CD4-positive, alpha-beta memory T cell (primary cell): ENCODE measurements at regions of chr5 and their contacts with region 1.

Region 1: DNA sequence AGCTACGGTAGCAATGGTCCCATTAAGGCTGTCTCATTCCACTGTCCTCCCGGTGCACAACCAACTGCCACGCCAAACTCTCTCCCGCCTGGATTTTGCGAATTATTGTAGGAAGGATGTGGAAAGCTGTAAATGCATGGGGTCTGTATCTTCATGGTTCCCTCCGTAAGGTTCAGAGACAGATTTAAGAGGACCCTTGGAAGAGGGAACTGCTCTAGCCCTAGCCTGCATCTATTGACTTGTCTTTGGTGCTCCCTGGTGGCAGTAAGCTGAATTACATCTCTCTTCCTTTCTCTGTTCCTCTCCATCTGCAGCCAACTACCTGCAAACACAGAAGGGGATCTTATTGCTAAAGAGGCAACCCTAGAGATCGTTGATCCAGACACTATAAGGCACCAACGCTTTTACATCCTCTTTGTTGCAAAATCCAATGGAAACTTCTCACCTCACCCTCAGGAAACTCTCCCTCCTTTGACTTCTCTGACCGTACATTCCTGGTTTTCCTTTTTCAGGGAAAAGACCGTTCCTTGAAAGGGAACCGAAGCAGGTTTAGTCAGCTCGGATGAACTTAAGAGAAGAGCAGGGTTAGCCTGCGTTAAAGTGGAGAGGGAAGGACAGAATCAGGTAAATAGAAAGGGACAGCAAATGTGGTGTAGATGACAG is 11.9 kb downstream of the CAPSL start:
- DNase-seq: peak; percentile 63 to 78 (median 72)
- H3K4me3 ChIP-seq: no peak overlapping the region
- H3K4me3 Mint-ChIP-seq: peak overlapping the region in 6 of 8 donors; percentile 60 to 82 (median 76)
- H3K27ac ChIP-seq: no peak overlapping the region
- H3K27ac Mint-ChIP-seq: peak overlapping the region in 3 of 7 donors; percentile 1 to 80 (median 49)
- H3K4me1 ChIP-seq: peaks cover 20% of the 10 kb centered on the region
- H3K4me1 Mint-ChIP-seq: peaks cover 26 to 38% (median 34%) of the 10 kb centered on the region in 4 donors
- H3K27me3 ChIP-seq: no peaks in the 10 kb centered on the region
- H3K27me3 Mint-ChIP-seq: peaks cover 5 to 7% of the 10 kb centered on the region in 2 donors

Region 2: DNA sequence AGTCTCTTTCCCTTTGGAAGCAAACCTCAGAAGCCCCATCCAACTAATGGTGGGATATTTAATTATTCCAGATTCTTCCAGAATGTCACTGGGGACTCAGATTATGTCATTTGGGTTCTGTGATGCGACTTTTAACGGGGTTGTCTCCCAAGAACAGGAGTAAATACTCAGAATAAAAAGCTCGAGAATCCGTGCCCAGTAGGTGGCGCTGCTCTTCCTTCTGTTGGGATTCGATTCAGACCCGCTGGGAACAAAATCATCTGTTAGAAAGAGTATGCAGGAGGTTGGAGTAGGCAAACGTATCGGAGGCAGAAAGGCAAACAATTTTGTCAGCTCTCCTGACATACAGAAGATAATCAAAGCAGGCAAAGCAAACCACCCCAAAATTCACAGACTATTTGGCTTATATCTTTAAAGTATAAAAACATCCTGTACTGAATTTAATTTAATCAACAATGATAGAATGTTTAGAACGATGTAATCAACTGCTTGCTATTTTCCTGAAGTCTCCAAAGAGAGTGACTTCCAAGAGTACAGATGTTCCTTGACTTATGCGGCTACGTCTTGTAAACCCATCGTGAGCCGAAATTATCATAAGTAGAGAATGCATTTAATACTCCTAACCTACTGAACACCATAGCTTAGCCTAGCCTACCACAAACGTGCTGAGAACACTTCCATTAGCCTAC is 1440.2 kb before region 1 on chr5:
- CTCF ChIA-PET with region 1: no interaction called
- POLR2A ChIA-PET with region 1: no interaction called
- intact Hi-C with region 1: loop called (anchors 2 kb)
- DNase-seq: peak in 4 of 5 donors; percentile 34 to 47 (median 42)
- H3K4me3 ChIP-seq: no peak overlapping the region
- H3K4me3 Mint-ChIP-seq: no peak overlapping the region
- H3K27ac ChIP-seq: no peak overlapping the region
- H3K27ac Mint-ChIP-seq: no peak overlapping the region
- H3K4me1 ChIP-seq: no peaks in the 10 kb centered on the region
- H3K4me1 Mint-ChIP-seq: peaks cover 3 to 5% (median 4%) of the 10 kb centered on the region in 4 donors
- H3K27me3 ChIP-seq: no peaks in the 10 kb centered on the region
- H3K27me3 Mint-ChIP-seq: peaks cover 17 to 30% of the 10 kb centered on the region in 2 donors

Region 3: DNA sequence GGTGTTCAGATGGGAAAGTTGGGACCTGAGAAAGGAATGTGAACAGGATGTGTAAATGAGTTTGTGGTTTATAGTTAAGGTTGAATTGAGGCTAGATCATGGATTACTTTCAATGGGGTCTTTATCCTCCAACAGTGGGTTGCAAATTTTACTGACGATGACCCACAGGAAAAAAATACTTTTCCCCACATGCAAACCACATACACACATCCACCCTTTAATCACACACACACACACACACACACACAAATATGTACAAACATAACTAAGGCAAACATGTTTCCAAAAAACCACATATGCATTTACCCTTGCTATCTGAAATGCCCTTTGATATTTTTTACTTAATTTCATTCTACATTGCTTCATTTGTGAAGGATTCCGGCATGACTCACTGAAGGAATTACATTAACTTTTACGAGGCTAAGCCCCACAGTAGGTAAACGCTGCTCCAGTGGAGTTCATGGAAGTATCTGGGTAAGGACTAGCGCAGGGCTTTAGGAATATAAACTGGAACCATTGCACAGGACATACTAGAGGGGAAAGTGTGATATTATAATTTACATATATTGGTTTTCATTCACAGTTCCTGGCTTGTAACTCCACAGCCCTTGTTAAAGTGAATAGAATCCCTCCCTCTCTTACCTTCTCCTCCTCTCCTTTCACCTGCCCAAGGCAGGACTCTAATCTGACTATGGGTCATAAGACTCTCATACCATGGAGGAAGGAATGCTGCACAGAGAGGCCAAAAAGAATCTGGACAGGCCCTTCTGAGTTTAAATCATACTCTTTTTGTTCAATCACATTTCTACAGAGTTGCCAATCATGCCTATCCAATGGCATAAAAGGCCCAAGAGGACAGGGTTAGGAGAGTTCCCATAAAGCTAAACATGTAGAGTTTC is 317.4 kb before region 1 on chr5:
- CTCF ChIA-PET with region 1: interaction called, 142 read pairs
- POLR2A ChIA-PET with region 1: no interaction called
- intact Hi-C with region 1: no loop called
- DNase-seq: no peak
- H3K4me3 ChIP-seq: no peak overlapping the region
- H3K4me3 Mint-ChIP-seq: no peak overlapping the region
- H3K27ac ChIP-seq: no peak overlapping the region
- H3K27ac Mint-ChIP-seq: no peak overlapping the region
- H3K4me1 ChIP-seq: no peaks in the 10 kb centered on the region
- H3K4me1 Mint-ChIP-seq: no peaks in the 10 kb centered on the region
- H3K27me3 ChIP-seq: no peaks in the 10 kb centered on the region
- H3K27me3 Mint-ChIP-seq: peaks cover 4 to 5% of the 10 kb centered on the region in 2 donors

Region 4: GRCh38 chr5:35657877-35658276 is 268.6 kb before region 1 on chr5:
- CTCF ChIA-PET with region 1: interaction called, 544 read pairs
- POLR2A ChIA-PET with region 1: interaction called, 48 read pairs
- intact Hi-C with region 1: loop called (anchors 2 kb)
- DNase-seq: peak in 1 of 5 donors; percentile 18
- H3K4me3 ChIP-seq: no peak overlapping the region
- H3K4me3 Mint-ChIP-seq: peak overlapping the region in 2 of 8 donors; percentile 29 to 47
- H3K27ac ChIP-seq: no peak overlapping the region
- H3K27ac Mint-ChIP-seq: peak overlapping the region in 5 of 7 donors; percentile 1 to 86 (median 45)
- H3K4me1 ChIP-seq: no peaks in the 10 kb centered on the region
- H3K4me1 Mint-ChIP-seq: peaks cover 6 to 23% (median 13%) of the 10 kb centered on the region in 4 donors
- H3K27me3 ChIP-seq: no peaks in the 10 kb centered on the region
- H3K27me3 Mint-ChIP-seq: no peaks in the 10 kb centered on the region

Region 5: DNA sequence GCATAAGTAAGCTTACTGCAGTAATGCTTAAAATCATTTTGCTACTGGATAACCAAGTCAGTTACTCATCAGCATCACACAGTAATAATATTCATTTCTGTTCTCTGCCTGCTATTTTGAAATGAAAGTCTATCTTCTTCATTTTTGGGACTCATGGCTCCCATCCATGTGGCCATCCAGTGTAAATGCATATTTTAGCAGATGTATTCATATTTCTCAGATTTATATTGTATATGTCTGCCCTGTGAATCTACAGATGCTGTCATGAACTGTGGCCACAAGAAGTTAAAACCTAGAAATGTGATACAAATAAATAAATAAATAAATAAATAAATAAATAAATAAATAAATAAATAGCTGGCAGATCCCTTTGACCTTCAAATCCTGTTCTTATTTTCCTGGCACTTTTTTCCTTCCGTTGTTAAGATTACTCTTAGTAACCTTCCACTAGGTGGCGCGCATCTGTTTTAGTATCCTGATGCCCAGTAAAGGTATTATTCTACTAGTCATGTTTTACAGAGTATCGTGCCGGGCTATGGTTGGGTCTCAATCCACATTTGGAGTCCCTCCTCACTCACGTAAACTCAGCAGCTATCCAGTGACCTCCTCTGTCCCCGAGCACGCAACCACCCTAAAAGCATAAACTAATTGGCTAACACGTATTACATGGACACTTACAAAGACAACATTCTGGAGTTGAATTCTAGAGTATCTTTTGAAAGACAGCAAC is 149.0 kb before region 1 on chr5:
- CTCF ChIA-PET with region 1: interaction called, 129 read pairs
- POLR2A ChIA-PET with region 1: interaction called, 25 read pairs
- intact Hi-C with region 1: loop called (anchors 1 kb)
- DNase-seq: peak; percentile 71 to 76 (median 75)
- H3K4me3 ChIP-seq: no peak overlapping the region
- H3K4me3 Mint-ChIP-seq: peak overlapping the region; percentile 75 to 86 (median 83)
- H3K27ac ChIP-seq: peak overlapping the region; percentile 54
- H3K27ac Mint-ChIP-seq: peak overlapping the region; percentile 81 to 98 (median 96)
- H3K4me1 ChIP-seq: peaks cover 73% of the 10 kb centered on the region
- H3K4me1 Mint-ChIP-seq: peaks cover 57 to 84% (median 69%) of the 10 kb centered on the region in 4 donors
- H3K27me3 ChIP-seq: no peaks in the 10 kb centered on the region
- H3K27me3 Mint-ChIP-seq: no peaks in the 10 kb centered on the region

Region 6: GRCh38 chr5:35857606-35858205 is 68.8 kb before region 1 on chr5:
- CTCF ChIA-PET with region 1: interaction called, 13 read pairs
- POLR2A ChIA-PET with region 1: interaction called, 23 read pairs
- intact Hi-C with region 1: loop called (anchors 2 kb)
- DNase-seq: peak in 3 of 5 donors; percentile 41 to 45 (median 44)
- H3K4me3 ChIP-seq: peak overlapping the region; percentile 82 to 85
- H3K4me3 Mint-ChIP-seq: peak overlapping the region; percentile 88 to 99 (median 96)
- H3K27ac ChIP-seq: peak overlapping the region; percentile 97
- H3K27ac Mint-ChIP-seq: peak overlapping the region; percentile 94 to 100 (median 100)
- H3K4me1 ChIP-seq: peaks cover 55% of the 10 kb centered on the region
- H3K4me1 Mint-ChIP-seq: peaks cover 42 to 73% (median 51%) of the 10 kb centered on the region in 4 donors
- H3K27me3 ChIP-seq: no peaks in the 10 kb centered on the region
- H3K27me3 Mint-ChIP-seq: no peaks in the 10 kb centered on the region

Region 7: DNA sequence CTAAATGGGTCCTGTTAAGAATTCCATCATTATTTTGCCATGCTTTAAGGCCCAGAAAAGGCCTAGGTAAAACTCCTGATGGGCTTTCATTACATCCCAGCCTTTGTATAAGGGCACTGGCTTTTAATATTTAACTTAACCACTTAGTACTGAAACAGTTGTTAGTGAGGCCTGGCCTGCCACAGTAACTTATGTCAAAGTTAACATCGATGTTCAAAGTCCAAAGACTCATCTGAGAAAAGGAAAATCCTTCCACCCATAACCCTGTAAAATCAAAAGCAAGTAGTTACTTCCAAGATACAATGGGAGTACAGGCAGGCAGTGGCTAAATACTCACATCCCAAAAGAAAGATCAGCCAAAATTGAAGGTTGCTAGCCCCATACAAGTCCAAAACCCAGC is 79.6 kb after region 1 on chr5:
- CTCF ChIA-PET with region 1: no interaction called
- POLR2A ChIA-PET with region 1: no interaction called
- intact Hi-C with region 1: no loop called
- DNase-seq: no peak
- H3K4me3 ChIP-seq: no peak overlapping the region
- H3K4me3 Mint-ChIP-seq: no peak overlapping the region
- H3K27ac ChIP-seq: no peak overlapping the region
- H3K27ac Mint-ChIP-seq: no peak overlapping the region
- H3K4me1 ChIP-seq: no peaks in the 10 kb centered on the region
- H3K4me1 Mint-ChIP-seq: no peaks in the 10 kb centered on the region
- H3K27me3 ChIP-seq: no peaks in the 10 kb centered on the region
- H3K27me3 Mint-ChIP-seq: peaks cover 9 to 14% of the 10 kb centered on the region in 2 donors